GM12878 (cell line): ENCODE measurements at regions of chr2 and their contacts with region 1.

Region 1: GRCh38 chr2:36329746-36330472 is 25.7 kb upstream of the CRIM1 start:
- DNase-seq: no peak
- ATAC-seq: no peak
- H3K4me3 ChIP-seq: no peak overlapping the region
- H3K27ac ChIP-seq: no peak overlapping the region
- H3K4me1 ChIP-seq: no peaks in the 10 kb centered on the region
- H3K27me3 ChIP-seq: no peaks in the 10 kb centered on the region
- CTCF ChIP-seq: no peak
- EP300 ChIP-seq: no peak
- POLR2A ChIP-seq: no peak
- RAD21 ChIP-seq: no peak

Region 2: DNA sequence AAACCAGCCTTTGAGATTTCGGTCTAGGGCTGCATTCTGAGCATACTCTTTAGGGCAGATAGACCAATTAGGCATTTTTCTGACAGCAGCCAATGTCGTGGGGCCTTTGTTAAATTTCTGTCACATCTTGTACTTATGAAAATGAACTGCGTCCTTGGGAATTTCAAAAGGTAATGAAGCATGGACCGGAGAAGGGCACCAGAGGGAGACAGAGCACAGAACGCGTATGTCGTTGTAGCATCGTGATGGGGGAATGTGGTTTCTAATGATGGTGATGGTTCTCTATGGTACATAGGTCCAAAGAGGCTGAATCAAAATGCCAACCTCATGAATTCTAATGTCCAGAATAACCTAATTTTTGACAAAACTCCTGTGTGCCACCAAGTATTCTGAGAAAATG is 458.2 kb before region 1 on chr2:
- CTCF ChIA-PET with region 1: interaction called, 3 read pairs
- POLR2A ChIA-PET with region 1: no interaction called
- RAD21 ChIA-PET with region 1: no interaction called
- SMC1A ChIA-PET with region 1: no interaction called
- in situ Hi-C with region 1: no loop called
- intact Hi-C with region 1: loop called (anchors 10 kb)
- DNase-seq: no peak
- ATAC-seq: no peak
- H3K4me3 ChIP-seq: no peak overlapping the region
- H3K27ac ChIP-seq: no peak overlapping the region
- H3K4me1 ChIP-seq: no peaks in the 10 kb centered on the region
- H3K27me3 ChIP-seq: no peaks in the 10 kb centered on the region
- CTCF ChIP-seq: no peak; a peak in 1 of 6 replicates
- EP300 ChIP-seq: no peak
- POLR2A ChIP-seq: no peak
- RAD21 ChIP-seq: no peak